ENCODE measurements at regions of chr17 and their contacts with region 1.

Region 1: DNA sequence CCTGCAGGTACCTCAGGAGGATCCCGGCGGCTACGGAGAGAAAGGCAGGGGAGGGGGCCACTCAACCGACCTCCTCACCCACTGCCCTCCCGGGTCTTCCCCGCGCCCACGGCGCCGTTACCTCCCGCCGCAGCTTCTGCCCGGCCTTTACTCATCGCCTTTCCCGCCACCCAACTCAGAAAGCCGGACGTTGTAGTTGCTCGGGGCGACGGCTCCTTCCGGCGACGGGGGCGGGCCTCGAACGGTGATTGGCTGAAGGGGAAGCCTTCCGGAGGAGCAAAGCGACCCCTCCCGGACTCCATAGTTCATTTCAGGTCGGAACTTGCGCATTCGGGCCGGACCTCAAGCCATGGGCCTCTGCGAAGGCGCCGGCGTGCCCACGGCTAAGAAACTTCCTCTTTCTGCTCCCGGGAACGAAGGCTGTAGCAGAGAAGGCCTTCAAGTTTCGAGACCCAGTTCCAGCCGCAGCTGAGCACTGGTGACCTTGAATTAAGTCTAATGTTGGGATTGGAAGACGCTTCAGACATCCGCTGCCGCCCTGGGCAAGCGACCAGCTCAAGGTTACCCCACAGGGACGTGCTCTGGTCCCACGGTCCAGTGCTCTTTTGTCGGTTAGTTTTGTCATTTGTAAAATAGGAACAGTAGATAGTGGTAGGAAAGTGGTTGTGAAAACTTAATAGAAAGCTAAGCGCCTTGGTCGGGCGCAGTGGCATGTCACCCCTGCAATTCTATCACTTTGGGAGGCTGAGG is at the start of gene PSMC3IP:
- DNase-seq: peak; percentile 94
- ATAC-seq: peak; percentile 95 to 96
- H3K4me3 ChIP-seq: peak within 1 kb of the TSS; percentile 61 to 94 (median 86)
- H3K27ac ChIP-seq: peak within 1 kb of the TSS; percentile 83 to 98 (median 91)
- H3K4me1 ChIP-seq: peaks cover 12 to 18% of the 10 kb centered on the region in 2 donors
- H3K27me3 ChIP-seq: no peaks in the 10 kb centered on the region
- CTCF ChIP-seq: peak in 2 of 5 experiments; percentile 23 to 30
- POLR2A ChIP-seq: peak; percentile 62 to 65
- total RNA-seq, gene PSMC3IP: 0.46 to 2.7 (median 1.4) TPM

Region 2: DNA sequence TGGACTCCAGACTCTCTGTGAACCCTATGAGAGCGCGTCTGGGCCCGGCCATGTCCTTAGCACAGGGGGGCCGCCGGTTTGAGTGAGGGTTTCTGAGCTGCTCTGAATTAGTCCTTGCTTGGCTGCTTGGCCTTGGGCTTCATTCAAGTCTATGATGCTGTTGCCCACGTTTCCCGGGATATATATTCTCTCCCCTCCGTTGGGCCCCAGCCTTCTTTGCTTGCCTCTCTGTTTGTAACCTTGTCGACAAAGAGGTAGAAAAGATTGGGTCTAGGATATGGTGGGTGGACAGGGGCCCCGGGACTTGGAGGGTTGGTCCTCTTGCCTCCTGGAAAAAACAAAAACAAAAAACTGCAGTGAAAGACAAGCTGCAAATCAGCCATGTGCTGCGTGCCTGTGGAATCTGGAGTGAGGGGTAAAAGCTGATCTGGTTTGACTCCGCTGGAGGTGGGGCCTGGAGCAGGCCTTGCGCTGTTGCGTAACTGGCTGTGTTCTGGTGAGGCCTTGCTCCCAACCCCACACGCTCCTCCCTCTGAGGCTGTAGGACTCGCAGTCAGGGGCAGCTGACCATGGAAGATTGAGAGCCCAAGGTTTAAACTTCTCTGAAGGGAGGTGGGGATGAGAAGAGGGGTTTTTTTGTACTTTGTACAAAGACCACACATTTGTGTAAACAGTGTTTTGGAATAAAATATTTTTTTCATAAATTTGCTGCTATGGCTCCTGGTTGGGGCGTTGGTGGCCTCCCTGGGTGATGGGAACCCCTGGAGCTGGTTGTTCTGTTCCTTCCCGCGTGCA is 266.3 kb before region 1 on chr17:
- in situ Hi-C with region 1: no loop called
- intact Hi-C with region 1: no loop called
- DNase-seq: peak; percentile 94 to 95
- ATAC-seq: peak; percentile 93
- H3K4me3 ChIP-seq: peak overlapping the region in 2 of 4 donors; percentile 12 to 53
- H3K27ac ChIP-seq: peak overlapping the region; percentile 84 to 95 (median 88)
- H3K4me1 ChIP-seq: peaks cover 16% of the 10 kb centered on the region in 2 donors
- H3K27me3 ChIP-seq: no peaks in the 10 kb centered on the region
- CTCF ChIP-seq: no peak
- POLR2A ChIP-seq: peak; percentile 22 to 40

Region 3: DNA sequence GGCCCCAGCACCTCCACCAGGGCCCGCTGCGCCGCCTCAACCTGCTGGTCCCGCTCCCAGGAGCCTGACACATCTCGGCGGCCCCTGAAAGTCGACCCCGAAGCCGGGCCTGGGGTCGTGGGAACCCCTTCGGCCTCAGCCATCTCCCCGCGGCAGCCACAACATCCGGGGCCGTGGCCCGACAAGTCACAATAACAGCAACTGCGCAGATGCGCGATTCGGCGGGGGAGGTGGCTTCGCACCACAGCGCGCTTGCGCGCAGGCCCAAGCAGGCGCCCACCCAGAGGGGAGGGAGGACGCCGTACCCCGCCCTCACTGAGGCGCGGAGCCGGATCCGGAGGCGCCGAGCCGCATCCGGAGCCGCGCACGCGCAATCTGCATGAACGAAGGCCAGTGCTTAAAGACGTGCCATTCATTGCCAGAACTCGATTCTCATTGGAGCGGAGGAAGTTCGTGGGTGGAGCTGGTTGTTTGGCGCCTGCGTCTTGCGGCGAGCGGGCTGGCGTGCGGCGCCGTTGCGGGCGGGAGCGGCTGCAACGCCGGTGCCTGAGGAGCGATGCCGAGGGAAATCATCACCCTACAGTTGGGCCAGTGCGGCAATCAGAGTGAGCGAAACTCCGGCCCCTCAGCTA is 31.6 kb after region 1 on chr17 and contains the starts of genes RETREG3 and TUBG1:
- in situ Hi-C with region 1: no loop called
- intact Hi-C with region 1: loop called (anchors 1 kb)
- DNase-seq: peak; percentile 97 to 99
- ATAC-seq: peak; percentile 95
- H3K4me3 ChIP-seq: peak within 1 kb of the TSS; percentile 92 to 100 (median 94)
- H3K27ac ChIP-seq: peak within 1 kb of the TSS; percentile 93 to 99 (median 96)
- H3K4me1 ChIP-seq: peaks cover 47 to 48% of the 10 kb centered on the region in 2 donors
- H3K27me3 ChIP-seq: no peaks in the 10 kb centered on the region
- CTCF ChIP-seq: peak in 4 of 5 experiments; percentile 24 to 51 (median 43)
- POLR2A ChIP-seq: peak; percentile 86 to 88
- total RNA-seq, gene RETREG3: 50.7 to 65.5 (median 60.5) TPM
- total RNA-seq, gene TUBG1: 54.7 to 125 (median 91.7) TPM

Region 4: GRCh38 chr17:42744806-42745617 is 167.3 kb after region 1 on chr17 and contains the start of gene EZH1:
- in situ Hi-C with region 1: loop called in 1 of 4 experiments (anchors 25 kb)
- intact Hi-C with region 1: loop called (anchors 2 kb)
- DNase-seq: peak; percentile 74 to 87
- ATAC-seq: peak; percentile 86
- H3K4me3 ChIP-seq: peak within 1 kb of the TSS; percentile 86 to 94 (median 94)
- H3K27ac ChIP-seq: peak within 1 kb of the TSS; percentile 98 to 100 (median 99)
- H3K4me1 ChIP-seq: peaks cover 26 to 29% of the 10 kb centered on the region in 2 donors
- H3K27me3 ChIP-seq: no peaks in the 10 kb centered on the region
- CTCF ChIP-seq: peak in 4 of 5 experiments; percentile 19 to 36 (median 28)
- POLR2A ChIP-seq: peak; percentile 79 to 91
- total RNA-seq, gene EZH1: 32.6 to 55.2 (median 47.5) TPM

Region 5: DNA sequence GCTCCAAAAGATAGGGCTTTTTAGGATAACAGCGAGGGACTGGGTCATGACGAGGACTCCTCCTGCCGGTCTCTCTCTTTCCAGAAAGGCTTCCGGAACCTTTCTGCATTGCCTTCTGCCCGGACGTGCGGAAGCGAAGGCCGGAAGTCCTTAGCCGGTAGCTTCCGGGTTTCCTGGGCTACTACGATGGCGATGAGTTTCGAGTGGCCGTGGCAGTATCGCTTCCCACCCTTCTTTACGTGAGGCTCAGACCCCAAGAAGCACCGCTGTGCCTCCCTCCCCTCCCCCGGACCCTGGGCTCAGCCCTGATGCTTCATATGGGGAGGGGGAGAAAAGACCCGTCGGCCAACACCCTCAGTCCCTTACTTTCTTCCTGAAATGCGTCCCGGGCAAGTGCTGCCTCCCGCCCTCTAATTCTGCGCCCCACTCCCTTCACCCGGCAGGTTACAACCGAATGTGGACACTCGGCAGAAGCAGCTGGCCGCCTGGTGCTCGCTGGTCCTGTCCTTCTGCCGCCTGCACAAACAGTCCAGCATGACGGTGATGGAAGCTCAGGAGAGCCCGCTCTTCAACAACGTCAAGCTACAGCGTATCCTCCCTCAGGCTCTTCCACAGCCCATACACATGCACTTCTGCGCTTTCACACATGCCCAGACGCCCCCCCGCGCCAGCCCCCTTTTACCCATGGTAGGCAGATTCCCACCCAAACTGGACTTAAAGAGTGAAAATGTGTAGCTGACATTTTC is 195.8 kb after region 1 on chr17 and contains the start of gene VPS25:
- in situ Hi-C with region 1: loop called in 2 of 4 experiments (anchors 10 to 25 kb)
- intact Hi-C with region 1: no loop called
- DNase-seq: peak; percentile 62 to 74
- ATAC-seq: peak; percentile 96 to 99
- H3K4me3 ChIP-seq: peak within 1 kb of the TSS; percentile 85 to 100 (median 91)
- H3K27ac ChIP-seq: peak within 1 kb of the TSS; percentile 81 to 94 (median 88)
- H3K4me1 ChIP-seq: peaks cover 12 to 17% of the 10 kb centered on the region in 2 donors
- H3K27me3 ChIP-seq: no peaks in the 10 kb centered on the region
- CTCF ChIP-seq: peak in 1 of 5 experiments; percentile 24
- POLR2A ChIP-seq: peak in 1 of 2 donors; percentile 47
- total RNA-seq, gene VPS25: 44.8 to 54.6 (median 53.5) TPM

Measured in gastrocnemius medialis (tissue), 4 donors.